ENCODE measurements at regions of chr2 and their contacts with region 1.

Region 1: GRCh38 chr2:205675861-205676516 is 6.3 kb upstream of the NRP2 start:
- DNase-seq: no peak

Region 2: DNA sequence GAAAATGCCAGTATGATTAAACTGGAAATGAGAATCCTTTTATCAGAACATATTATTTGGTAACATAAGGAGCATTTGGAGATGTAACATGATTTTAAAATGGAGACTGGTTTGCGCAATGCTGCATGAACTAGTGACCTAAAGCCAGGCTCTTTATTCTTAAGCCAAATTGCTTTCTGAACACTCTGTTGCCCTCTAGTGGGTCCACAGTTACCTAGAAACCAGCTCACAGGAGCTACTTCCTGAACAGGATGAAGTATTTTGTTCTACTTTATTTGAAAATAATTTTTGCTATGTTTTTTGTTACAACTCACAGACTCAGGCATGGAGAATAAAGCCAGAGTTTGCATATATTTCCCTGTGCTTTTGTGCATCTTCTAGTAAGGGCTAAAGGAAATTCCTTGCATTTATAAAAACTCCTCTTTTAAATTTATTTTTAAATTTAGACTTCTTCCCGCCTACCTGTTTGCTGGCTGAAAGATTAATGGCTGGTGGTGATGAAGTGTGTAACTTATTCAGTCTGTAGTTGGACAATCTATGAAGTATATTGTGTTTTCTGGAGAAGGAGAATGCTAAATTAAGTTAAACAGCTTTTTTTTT is 984.0 kb before region 1 on chr2:
- intact Hi-C with region 1: loop called (anchors 5 kb)
- DNase-seq: no peak

Region 3: GRCh38 chr2:204871231-204871953 is 804.6 kb before region 1 on chr2:
- intact Hi-C with region 1: loop called (anchors 2 kb)
- DNase-seq: no peak

Measured in cardiac septum (tissue), 1 donor.